PC-9 (cell line): ENCODE measurements at regions of chr11 and their contacts with region 1.

Region 1: DNA sequence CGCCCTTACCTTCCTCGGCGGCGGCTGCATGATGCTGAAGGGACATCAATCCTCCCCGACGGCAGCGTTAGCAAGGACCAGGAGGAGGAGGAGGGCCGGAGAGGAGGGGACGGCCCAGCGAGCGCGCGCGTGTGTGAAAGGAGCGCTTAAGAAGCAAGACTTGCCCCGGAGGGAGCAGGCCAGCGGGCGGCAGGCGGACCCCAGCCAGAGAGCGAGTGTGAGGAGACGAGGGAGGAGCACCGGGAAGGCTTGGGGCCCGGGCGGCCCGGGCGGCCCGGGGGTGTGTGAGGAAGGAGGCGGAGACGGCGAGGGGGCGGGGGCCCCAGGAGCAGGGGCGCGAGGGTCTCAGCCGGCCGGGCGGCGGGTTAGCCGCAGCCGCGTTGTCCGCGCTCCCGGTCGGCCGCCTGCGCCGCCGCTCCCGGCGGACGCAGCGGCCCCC is 251 bp downstream of the FCHSD2 start:
- DNase-seq: peak; percentile 64 to 74
- H3K4me3 ChIP-seq: peak overlapping the region; percentile 98
- H3K27ac ChIP-seq: peak overlapping the region; percentile 48; the same call in 1 of the 2 replicates
- H3K4me1 ChIP-seq: peaks cover 20% of the 10 kb centered on the region
- H3K27me3 ChIP-seq: no peaks in the 10 kb centered on the region
- CTCF ChIP-seq: no peak

Region 2: DNA sequence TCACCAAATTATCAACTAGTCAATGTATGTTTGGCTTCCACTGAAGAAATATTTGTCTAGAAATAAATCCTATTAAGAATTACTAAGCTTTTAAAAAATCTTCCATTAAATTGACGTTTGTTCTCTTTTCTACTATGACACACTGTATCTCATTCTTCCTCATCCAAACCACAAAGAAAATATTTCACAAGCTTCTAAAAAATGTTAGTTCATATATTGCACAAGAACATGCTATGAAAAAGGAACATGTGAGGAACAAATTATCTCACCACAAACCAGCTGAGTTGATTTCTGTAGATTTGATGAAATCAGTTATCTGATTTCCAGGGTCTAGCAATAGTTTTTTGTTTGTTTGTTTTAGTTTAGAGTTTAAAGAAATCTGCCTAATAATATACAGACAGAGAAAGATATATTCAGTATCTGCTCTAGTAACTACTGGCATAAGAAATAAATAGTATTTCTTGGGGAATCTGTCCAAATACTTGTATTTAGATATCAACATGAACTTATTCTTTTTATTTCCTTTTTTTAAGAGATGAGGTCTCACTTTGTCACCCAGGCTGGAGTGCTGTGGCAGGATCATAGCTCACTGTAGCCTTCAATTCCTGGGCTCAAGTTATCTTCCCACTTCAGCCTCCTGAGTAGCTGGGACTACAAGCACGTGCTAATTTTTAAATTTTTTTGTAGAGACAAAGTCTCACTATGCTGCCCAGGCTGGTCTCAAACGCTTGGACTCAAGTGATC is 165.9 kb before region 1 on chr11:
- CTCF ChIA-PET with region 1: interaction called, 13 read pairs
- POLR2A ChIA-PET with region 1: no interaction called
- intact Hi-C with region 1: no loop called
- DNase-seq: peak in 1 of 2 experiments; percentile 78
- H3K4me3 ChIP-seq: no peak overlapping the region
- H3K27ac ChIP-seq: peak overlapping the region; percentile 0; the same call in 1 of the 2 replicates
- H3K4me1 ChIP-seq: peaks cover 11% of the 10 kb centered on the region; the same call in 1 of the 2 replicates
- H3K27me3 ChIP-seq: no peaks in the 10 kb centered on the region
- CTCF ChIP-seq: no peak

Region 3: DNA sequence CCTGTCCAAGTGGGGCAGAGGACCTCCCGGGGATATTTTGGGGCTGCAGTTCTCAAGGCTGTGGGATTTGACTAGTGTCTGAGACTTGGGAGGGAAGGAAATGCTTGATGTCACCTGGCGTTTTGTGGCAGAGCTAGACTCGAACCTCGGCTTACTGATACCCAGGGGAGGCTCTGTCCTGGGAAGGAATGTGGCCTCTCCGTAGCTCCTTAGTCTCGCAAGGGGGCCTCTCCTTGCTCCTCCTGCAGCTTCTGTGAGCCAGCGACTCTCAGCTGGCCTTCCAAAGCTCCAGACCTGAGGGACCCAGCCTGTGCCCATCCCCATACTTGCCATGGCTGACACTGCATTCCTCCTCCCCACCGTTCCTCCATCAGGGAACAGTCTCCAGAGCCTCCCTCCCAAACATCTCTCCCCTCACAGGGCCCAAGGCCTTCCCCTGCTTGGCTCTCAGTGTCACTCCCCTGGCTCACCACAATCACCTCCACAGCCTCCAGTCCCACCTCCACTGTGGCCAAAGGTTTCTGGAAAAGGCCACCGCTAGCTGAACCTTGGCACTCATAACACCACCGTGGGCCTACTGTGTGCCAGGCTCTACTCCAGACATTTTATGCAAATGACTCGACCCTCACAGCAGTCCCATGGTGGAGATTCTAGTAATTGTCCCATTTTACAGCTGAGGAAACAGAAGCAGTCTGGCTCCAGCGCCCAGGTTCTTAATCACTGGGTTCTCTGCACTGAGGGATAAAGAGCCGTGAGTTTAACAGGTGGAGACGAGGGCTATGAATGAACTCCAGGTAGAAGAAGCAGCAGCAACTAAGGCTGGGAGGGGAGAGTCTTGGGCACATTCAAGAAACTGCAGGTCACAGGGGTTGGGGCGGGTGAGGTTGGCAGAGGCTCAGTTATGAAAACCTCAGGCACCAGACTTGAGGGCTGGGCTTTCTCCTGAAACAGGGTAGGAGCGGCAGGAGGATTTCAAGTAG is 88.3 kb after region 1 on chr11:
- CTCF ChIA-PET with region 1: no interaction called
- POLR2A ChIA-PET with region 1: no interaction called
- intact Hi-C with region 1: no loop called
- DNase-seq: no peak
- H3K4me3 ChIP-seq: no peak overlapping the region
- H3K27ac ChIP-seq: no peak overlapping the region
- H3K4me1 ChIP-seq: peaks cover 38% of the 10 kb centered on the region
- H3K27me3 ChIP-seq: no peaks in the 10 kb centered on the region
- CTCF ChIP-seq: no peak

Region 4: GRCh38 chr11:73360336-73361013 is 218.6 kb after region 1 on chr11:
- CTCF ChIA-PET with region 1: no interaction called
- POLR2A ChIA-PET with region 1: no interaction called
- intact Hi-C with region 1: no loop called
- DNase-seq: peak in 1 of 2 experiments; percentile 32
- H3K4me3 ChIP-seq: no peak overlapping the region
- H3K27ac ChIP-seq: no peak overlapping the region
- H3K4me1 ChIP-seq: no peaks in the 10 kb centered on the region
- H3K27me3 ChIP-seq: no peaks in the 10 kb centered on the region
- CTCF ChIP-seq: peak; percentile 71